Ascending aorta (tissue), 2 donors: ENCODE measurements at regions of chr17 and their contacts with region 1.

Region 1: DNA sequence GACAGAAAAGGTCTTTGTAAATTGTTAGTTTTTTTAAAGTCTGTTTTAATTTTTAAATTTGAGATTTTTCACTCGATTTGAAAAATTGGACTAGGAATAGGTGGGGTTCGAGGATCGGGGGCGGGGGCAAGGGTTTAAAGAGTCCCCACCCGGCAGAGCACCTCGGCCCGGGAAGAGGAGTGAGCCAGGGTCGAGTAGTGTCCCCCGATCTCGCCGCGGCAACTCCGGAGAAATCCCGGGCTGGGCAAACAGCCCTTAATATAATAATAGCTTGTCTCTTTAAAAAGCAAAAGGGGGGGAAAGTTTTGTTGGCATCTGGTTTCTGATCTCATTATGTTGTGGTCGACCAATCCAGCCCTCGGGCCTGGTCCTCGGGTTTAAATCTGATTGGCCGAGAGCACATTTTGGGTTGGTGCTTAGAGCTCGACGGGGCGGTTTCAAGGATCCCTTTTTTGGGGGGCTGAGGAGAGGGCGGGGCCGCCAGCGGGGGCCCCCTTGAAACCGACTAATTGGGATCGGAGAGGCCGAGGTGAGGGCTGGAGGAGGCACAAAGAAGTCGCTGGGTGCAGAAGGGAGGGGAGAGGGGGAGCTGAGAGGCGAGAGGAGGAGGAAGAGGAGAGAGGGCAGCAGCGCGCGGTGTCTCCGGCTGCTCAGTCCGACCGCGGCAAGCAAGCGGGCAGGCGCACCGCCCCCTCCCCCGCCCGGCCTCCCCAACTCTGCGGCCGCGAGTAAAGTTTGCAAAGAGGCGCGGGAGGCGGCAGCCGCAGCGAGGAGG is at the start of gene FZD2:
- DNase-seq: peak; percentile 90 to 96
- H3K4me3 ChIP-seq: peak within 1 kb of the TSS; percentile 67 to 87
- H3K27ac ChIP-seq: peak within 1 kb of the TSS; percentile 78 to 91
- H3K4me1 ChIP-seq: peaks cover 7 to 16% of the 10 kb centered on the region in 2 donors
- H3K27me3 ChIP-seq: no peaks in the 10 kb centered on the region
- CTCF ChIP-seq: no peak
- total RNA-seq, gene FZD2: 32.7 TPM

Region 2: DNA sequence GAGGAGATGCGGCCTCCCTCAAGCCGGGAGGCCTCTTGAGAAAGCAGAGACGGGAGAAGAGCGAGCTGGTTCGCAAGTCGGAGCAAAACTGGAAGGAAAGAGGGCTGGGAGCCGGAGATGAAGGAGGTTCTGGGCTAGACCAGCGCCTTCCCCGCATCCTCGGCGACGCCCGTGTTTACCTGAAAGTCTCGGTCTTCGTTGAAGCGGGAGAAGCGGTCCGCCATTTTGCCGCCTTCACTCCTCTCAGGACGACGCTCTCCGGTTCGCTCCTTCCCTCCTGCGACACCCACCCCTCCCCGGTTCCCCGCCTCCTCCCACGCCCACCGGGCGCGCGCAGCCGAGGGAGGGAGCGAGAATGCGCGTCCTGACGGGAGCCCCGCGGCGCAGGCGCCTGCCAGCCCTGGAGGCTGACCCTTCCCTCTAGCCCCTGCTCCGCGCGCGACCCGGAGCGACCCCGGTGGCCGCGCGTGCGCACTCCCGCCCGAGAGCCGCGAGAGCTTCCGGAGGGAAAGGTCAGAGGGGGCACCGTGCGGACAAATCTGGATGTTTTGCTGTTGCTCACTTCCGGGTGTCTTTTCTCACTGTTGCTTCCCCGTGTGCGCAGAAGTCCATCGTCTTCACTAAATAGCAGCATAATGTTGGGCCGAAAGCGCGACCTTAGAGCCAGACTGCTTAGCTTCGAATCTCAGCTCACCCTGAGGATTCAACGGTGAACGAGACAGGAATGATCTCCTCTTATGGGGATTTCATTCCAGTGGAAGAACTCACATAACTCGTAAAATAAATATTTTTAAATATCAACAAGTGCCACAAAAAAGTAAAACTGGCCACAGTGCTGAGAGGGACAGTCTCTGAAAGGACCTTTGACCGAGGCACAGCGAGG is 53.6 kb before region 1 on chr17 and contains the start of gene GPATCH8:
- intact Hi-C with region 1: loop called (anchors 5 kb)
- DNase-seq: peak; percentile 77 to 96
- H3K4me3 ChIP-seq: peak within 1 kb of the TSS; percentile 68 to 90
- H3K27ac ChIP-seq: peak within 1 kb of the TSS; percentile 88 to 91
- H3K4me1 ChIP-seq: peaks cover 0 to 14% of the 10 kb centered on the region in 2 donors
- H3K27me3 ChIP-seq: no peaks in the 10 kb centered on the region
- CTCF ChIP-seq: no peak
- total RNA-seq, gene GPATCH8: 13.3 TPM

Region 3: DNA sequence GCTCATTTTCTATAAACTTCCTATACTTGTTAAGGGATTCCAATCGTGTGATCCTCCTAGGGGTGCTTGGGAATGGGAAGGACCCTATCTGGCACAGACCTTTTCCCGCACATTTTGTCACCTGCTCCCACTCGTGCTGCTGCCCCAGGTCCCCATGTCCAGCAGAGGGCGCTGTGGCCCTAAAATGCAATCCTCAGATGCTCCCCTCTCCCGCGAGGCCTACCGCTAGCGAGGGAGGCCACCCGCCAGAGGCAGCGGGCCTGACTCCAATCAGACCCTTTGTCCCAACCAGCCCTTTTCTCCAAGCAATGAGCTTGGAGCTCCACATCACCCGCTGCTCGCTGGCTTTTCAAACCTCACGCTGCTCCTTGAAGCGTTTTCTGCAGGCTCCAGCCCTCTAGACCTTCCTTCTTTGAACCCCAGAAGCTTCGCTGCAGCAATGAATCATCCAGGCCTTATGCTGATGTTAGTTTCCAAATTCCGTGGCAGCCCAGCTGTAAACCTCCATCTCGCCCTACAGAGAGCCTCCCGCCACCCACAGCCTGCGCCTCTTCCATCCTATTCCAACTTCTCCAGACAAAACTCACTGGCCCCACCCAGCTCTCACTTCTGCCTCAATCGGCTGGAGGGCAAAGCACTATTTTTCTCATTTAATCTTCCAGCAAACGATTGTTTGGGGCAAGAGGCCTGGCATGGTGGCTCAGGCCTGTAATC is 23.3 kb before region 1 on chr17:
- intact Hi-C with region 1: loop called (anchors 1 kb)
- DNase-seq: peak in 1 of 2 donors; percentile 93
- H3K4me3 ChIP-seq: peak overlapping the region in 1 of 2 donors; percentile 49
- H3K27ac ChIP-seq: peak overlapping the region; percentile 62 to 74
- H3K4me1 ChIP-seq: peaks cover 5% of the 10 kb centered on the region in 2 donors
- H3K27me3 ChIP-seq: no peaks in the 10 kb centered on the region
- CTCF ChIP-seq: peak; percentile 93 to 98 (median 98)

Region 4: GRCh38 chr17:44587339-44587738 is 30.3 kb after region 1 on chr17:
- intact Hi-C with region 1: loop called (anchors 2 kb)
- DNase-seq: peak; percentile 64 to 90
- H3K4me3 ChIP-seq: no peak overlapping the region
- H3K27ac ChIP-seq: peak overlapping the region; percentile 86 to 94
- H3K4me1 ChIP-seq: peaks cover 6 to 25% of the 10 kb centered on the region in 2 donors
- H3K27me3 ChIP-seq: no peaks in the 10 kb centered on the region
- CTCF ChIP-seq: no peak

Region 5: GRCh38 chr17:44599298-44600175 is 42.5 kb after region 1 on chr17:
- intact Hi-C with region 1: loop called (anchors 1 kb)
- DNase-seq: peak; percentile 74 to 93
- H3K4me3 ChIP-seq: no peak overlapping the region
- H3K27ac ChIP-seq: peak overlapping the region; percentile 65 to 88
- H3K4me1 ChIP-seq: peaks cover 7 to 11% of the 10 kb centered on the region in 2 donors
- H3K27me3 ChIP-seq: no peaks in the 10 kb centered on the region
- CTCF ChIP-seq: no peak

Region 6: DNA sequence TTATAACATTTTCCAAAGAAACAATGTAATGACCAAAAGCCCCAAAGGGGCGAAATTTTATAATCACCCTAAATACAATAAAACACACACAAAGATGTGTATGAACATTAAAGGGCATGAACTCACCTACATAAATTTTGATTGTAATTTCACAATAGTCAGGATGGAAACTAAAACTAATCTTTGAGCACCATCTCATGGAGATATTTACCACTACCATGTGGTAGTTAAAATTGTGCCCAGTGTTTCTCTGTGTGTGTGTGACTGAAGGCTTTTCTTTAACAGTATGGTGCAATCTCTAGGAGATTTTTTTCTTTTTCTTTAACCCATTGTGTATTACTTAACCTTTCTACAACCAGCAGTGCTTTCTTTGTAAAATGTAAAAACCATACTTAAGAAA is 79.5 kb after region 1 on chr17:
- intact Hi-C with region 1: loop called (anchors 2 kb)
- DNase-seq: no peak
- H3K4me3 ChIP-seq: no peak overlapping the region
- H3K27ac ChIP-seq: no peak overlapping the region
- H3K4me1 ChIP-seq: no peaks in the 10 kb centered on the region
- H3K27me3 ChIP-seq: no peaks in the 10 kb centered on the region
- CTCF ChIP-seq: peak; percentile 50 to 70 (median 67)

Region 7: DNA sequence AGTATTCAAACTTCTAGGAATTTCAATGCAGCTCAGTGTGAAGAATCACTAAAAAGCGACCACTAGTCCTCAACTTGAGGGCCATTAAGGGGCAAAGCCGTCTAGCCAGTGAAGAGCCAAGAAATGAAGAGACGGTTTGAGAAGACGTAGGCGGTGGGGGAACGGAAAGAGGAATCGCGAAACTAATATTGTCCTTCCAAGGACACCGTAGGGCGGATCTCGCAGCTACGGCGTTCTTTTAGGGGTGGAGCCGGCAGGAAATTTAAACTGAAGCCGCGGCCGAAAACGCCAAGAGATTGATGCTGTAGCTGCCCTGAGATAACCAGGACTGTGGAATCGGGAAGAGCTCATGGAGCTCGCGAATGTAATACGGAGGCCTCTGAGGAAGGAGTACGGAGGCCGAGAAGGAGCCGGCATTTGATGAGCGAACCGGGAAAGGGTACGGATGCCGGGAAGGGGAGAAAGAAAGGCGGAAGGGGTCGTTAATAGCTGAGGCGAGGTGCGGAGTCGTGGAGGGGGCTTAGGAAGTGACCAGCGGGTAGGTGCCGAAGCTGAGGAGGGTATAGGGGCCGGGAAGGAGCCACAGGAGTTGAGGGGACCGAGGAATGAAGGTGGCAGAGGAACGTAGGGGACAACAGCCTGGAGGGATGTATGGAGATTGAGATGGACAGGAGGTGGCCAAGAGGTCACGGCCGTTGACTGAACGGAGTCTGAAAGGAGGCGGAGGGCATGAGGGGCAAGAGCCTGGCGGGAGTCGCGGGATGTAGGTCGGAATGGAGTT is 151.6 kb after region 1 on chr17 and contains the start of gene DBF4B:
- intact Hi-C with region 1: loop called (anchors 2 kb)
- DNase-seq: peak; percentile 9 to 85
- H3K4me3 ChIP-seq: peak within 1 kb of the TSS; percentile 88 to 92
- H3K27ac ChIP-seq: peak within 1 kb of the TSS; percentile 64 to 67
- H3K4me1 ChIP-seq: peaks cover 0 to 8% of the 10 kb centered on the region in 2 donors
- H3K27me3 ChIP-seq: no peaks in the 10 kb centered on the region
- CTCF ChIP-seq: no peak
- total RNA-seq, gene DBF4B: 9.7 TPM

Region 8: DNA sequence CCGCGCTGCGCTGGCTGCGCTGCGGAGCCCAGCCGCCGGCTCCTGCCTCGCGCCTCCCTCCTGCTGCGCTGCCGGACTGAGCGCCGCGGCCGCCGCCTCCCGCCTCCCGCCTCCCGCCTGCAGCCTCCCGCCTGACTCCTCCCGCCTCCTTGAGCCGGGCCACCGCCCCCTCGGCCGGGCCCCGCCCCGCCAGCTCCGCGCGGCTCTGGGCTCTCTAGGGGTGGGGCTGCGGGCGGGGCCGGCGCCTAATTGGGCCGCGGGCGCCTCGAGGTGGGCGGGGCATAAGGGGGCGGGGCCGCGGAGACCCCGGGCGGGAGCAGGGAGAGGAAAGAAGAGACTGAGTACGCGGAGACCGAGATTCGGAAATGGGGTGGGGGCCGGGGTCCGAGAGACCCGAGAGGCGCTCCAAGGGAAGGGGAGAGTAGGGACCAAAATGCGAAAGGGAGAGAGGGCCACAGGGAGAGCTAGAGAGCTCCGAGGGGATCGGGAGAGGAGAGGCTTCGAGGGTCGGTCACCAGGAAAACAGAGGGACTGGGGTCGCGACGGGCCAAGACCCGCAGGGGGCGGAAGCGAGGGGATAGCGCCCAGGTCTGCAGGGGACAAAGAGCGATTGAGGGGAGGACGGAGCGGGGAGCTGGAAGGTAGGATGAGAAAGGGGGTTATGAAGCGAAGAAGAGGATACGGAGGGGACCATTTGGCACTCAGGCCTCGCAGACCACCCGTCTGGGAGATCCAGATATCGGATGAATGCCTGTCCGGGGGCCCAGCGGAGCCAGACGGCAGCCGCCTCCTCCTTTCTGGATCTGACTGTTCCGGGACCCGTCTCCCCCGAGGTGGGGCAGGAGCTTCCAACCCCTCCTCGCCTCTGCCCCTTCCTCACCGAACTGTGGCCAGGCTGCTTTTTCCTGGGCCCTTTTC is 411.5 kb after region 1 on chr17 and contains the start of gene C1QL1:
- intact Hi-C with region 1: no loop called
- DNase-seq: peak; percentile 45 to 94
- H3K4me3 ChIP-seq: peak within 1 kb of the TSS; percentile 27 to 53
- H3K27ac ChIP-seq: no peak within 1 kb of the TSS
- H3K4me1 ChIP-seq: peaks cover 10 to 15% of the 10 kb centered on the region in 2 donors
- H3K27me3 ChIP-seq: peaks cover 9% of the 10 kb centered on the region
- CTCF ChIP-seq: no peak
- total RNA-seq, gene C1QL1: not detected